Transverse colon (tissue), 4 donors: ENCODE measurements at regions of chr2 and their contacts with region 1.

Region 1: GRCh38 chr2:237060534-237061312 is 25.0 kb upstream of the COPS8 start:
- DNase-seq: peak; percentile 37
- H3K4me3 ChIP-seq: no peak overlapping the region
- H3K27ac ChIP-seq: no peak overlapping the region
- H3K4me1 ChIP-seq: no peaks in the 10 kb centered on the region
- H3K27me3 ChIP-seq: no peaks in the 10 kb centered on the region
- CTCF ChIP-seq: peak; percentile 46 to 60 (median 52)
- EP300 ChIP-seq: no peak
- POLR2A ChIP-seq: no peak

Region 2: GRCh38 chr2:236352761-236353593 is 707.7 kb before region 1 on chr2:
- in situ Hi-C with region 1: loop called in 1 of 4 experiments (anchors 10 kb)
- intact Hi-C with region 1: loop called (anchors 5 kb)
- DNase-seq: no peak
- H3K4me3 ChIP-seq: no peak overlapping the region
- H3K27ac ChIP-seq: no peak overlapping the region
- H3K4me1 ChIP-seq: no peaks in the 10 kb centered on the region
- H3K27me3 ChIP-seq: no peaks in the 10 kb centered on the region
- CTCF ChIP-seq: peak; percentile 69 to 92 (median 81)
- EP300 ChIP-seq: no peak
- POLR2A ChIP-seq: no peak

Region 3: DNA sequence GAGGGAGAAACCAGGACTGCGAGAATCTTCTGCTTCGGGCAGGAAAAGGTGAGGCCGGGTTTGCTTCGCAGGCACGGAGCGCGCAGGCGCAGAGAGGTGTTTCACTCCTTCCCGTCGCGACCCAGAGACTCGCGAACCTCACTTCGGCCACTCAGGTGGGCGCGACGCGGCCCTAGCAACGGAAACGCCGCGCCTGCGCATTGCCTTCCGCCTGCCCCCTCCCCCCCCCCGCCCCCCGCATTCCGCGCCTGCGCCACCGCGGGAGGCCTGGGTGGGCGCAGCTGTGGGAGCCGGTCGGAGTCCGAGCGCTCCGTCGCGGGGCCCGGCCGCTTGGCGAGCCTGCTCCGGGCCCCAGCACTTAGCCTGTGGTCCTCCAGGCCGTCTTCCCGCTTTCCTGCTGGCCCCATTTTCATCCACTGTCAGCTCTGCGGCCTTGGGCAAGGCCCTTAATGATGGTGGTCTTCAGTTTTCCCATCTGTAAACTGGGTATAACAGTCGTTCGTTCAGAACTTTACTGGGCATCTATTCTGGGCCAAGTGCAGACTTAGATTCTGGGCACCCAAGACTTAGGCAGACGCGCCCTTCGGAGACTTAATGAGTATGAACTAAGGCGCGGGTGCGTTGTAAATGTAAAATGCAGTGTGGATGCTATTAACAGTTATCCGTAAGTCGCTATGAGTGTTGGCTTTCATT is 553.2 kb before region 1 on chr2:
- in situ Hi-C with region 1: loop called in 3 of 4 experiments (anchors 10 to 25 kb)
- intact Hi-C with region 1: loop called (anchors 10 kb)
- DNase-seq: peak; percentile 32
- H3K4me3 ChIP-seq: peak overlapping the region in 3 of 4 donors; percentile 14 to 43 (median 25)
- H3K27ac ChIP-seq: no peak overlapping the region
- H3K4me1 ChIP-seq: no peaks in the 10 kb centered on the region
- H3K27me3 ChIP-seq: peaks cover 26% of the 10 kb centered on the region
- CTCF ChIP-seq: no peak
- EP300 ChIP-seq: no peak
- POLR2A ChIP-seq: no peak

Region 4: GRCh38 chr2:237025112-237025809 is 35.5 kb before region 1 on chr2:
- in situ Hi-C with region 1: no loop called
- intact Hi-C with region 1: no loop called
- DNase-seq: peak; percentile 73
- H3K4me3 ChIP-seq: no peak overlapping the region
- H3K27ac ChIP-seq: peak overlapping the region in 3 of 4 donors; percentile 43 to 58 (median 54)
- H3K4me1 ChIP-seq: peaks cover 0 to 7% (median 4%) of the 10 kb centered on the region in 4 donors
- H3K27me3 ChIP-seq: no peaks in the 10 kb centered on the region
- CTCF ChIP-seq: no peak
- EP300 ChIP-seq: peak; percentile 86
- POLR2A ChIP-seq: peak; percentile 28